AG04450 (cell line): ENCODE measurements at regions of chr5 and their contacts with region 1.

Region 1: GRCh38 chr5:88729084-88729828 is 153.7 kb downstream of the MEF2C start:
- DNase-seq: peak; percentile 59
- H3K4me3 ChIP-seq: no peak overlapping the region
- H3K27ac ChIP-seq: no peak overlapping the region
- H3K27me3 ChIP-seq: no peaks in the 10 kb centered on the region
- CTCF ChIP-seq: peak; percentile 73

Region 2: GRCh38 chr5:87780831-87781760 is 948.2 kb before region 1 on chr5:
- CTCF ChIA-PET with region 1: interaction called, 281 read pairs
- POLR2A ChIA-PET with region 1: no interaction called
- DNase-seq: peak; percentile 61
- H3K4me3 ChIP-seq: no peak overlapping the region
- H3K27ac ChIP-seq: no peak overlapping the region
- H3K27me3 ChIP-seq: no peaks in the 10 kb centered on the region
- CTCF ChIP-seq: peak; percentile 97

Region 3: GRCh38 chr5:88746438-88746882 is 17.2 kb after region 1 on chr5:
- CTCF ChIA-PET with region 1: interaction called, 49 read pairs
- POLR2A ChIA-PET with region 1: interaction called, 4 read pairs
- DNase-seq: no peak
- H3K4me3 ChIP-seq: no peak overlapping the region
- H3K27ac ChIP-seq: no peak overlapping the region
- H3K27me3 ChIP-seq: no peaks in the 10 kb centered on the region
- CTCF ChIP-seq: no peak

Region 4: GRCh38 chr5:88829054-88829453 is 99.8 kb after region 1 on chr5:
- CTCF ChIA-PET with region 1: interaction called, 11 read pairs
- POLR2A ChIA-PET with region 1: no interaction called
- DNase-seq: no peak
- H3K4me3 ChIP-seq: no peak overlapping the region
- H3K27ac ChIP-seq: no peak overlapping the region
- H3K27me3 ChIP-seq: no peaks in the 10 kb centered on the region
- CTCF ChIP-seq: peak; percentile 26

Region 5: GRCh38 chr5:88944751-88945531 is 215.7 kb after region 1 on chr5:
- CTCF ChIA-PET with region 1: interaction called, 25 read pairs
- POLR2A ChIA-PET with region 1: no interaction called
- DNase-seq: peak; percentile 23
- H3K4me3 ChIP-seq: no peak overlapping the region
- H3K27ac ChIP-seq: no peak overlapping the region
- H3K27me3 ChIP-seq: no peaks in the 10 kb centered on the region
- CTCF ChIP-seq: no peak

Region 6: GRCh38 chr5:90161414-90161813 is 1432.2 kb after region 1 on chr5:
- CTCF ChIA-PET with region 1: interaction called, 14 read pairs
- POLR2A ChIA-PET with region 1: no interaction called
- DNase-seq: no peak
- H3K4me3 ChIP-seq: no peak overlapping the region
- H3K27ac ChIP-seq: no peak overlapping the region
- H3K27me3 ChIP-seq: no peaks in the 10 kb centered on the region
- CTCF ChIP-seq: peak; percentile 28; the same call in 1 of the 2 replicates